Right ventricle myocardium inferior (tissue), 1 donor: ENCODE measurements at regions of chr18 and their contacts with region 1.

Region 1: DNA sequence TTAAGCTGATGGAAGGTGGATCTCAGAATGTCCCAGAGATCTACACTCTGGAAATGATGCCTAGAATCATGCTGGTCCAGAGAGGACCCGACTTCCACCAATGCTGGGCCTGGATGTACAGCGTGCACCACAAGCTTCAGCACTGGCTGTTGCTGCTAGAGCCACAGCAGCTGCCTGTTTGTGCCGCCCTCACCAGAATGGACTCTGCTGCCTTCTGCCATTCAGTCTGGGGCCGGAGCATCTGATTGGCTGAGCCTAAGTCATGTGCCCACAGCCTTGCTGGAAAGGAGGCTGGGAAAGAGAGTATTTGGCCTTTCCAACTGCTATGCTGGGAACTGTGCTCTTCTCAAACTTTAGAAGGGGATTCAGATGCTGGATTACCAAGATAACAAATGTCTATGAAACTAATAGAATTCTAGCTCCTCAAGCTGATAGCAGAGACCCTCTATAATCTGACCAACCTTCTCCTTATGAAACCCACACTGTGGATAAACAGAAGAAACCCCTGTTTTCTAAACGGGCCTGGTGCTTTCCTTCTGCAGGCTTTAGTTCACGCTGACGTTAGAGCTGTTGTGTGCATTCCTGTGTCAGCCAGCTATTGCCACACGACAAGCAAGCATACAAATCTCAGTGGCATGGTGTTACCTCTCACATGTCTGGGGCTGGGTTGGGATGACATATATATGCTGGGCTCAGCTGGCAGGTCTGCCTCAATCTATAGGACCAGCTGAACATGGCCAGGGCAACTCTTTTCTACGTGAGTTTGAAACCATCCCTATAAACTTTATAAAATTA is 4.1 kb upstream of the LOXHD1 start:
- DNase-seq: no peak
- ATAC-seq: no peak

Region 2: GRCh38 chr18:46148810-46149209 is 512.3 kb before region 1 on chr18:
- intact Hi-C with region 1: loop called (anchors 2 kb)
- DNase-seq: no peak
- ATAC-seq: peak; percentile 37

Region 3: GRCh38 chr18:46173393-46174341 is 487.5 kb before region 1 on chr18:
- intact Hi-C with region 1: loop called (anchors 2 kb)
- DNase-seq: peak; percentile 98
- ATAC-seq: peak; percentile 98

Region 4: GRCh38 chr18:46281185-46282176 is 379.7 kb before region 1 on chr18:
- intact Hi-C with region 1: loop called (anchors 5 kb)
- DNase-seq: peak; percentile 78
- ATAC-seq: peak; percentile 79

Region 5: GRCh38 chr18:46481048-46481846 is 179.9 kb before region 1 on chr18:
- intact Hi-C with region 1: loop called (anchors 5 kb)
- DNase-seq: no peak
- ATAC-seq: no peak

Region 6: DNA sequence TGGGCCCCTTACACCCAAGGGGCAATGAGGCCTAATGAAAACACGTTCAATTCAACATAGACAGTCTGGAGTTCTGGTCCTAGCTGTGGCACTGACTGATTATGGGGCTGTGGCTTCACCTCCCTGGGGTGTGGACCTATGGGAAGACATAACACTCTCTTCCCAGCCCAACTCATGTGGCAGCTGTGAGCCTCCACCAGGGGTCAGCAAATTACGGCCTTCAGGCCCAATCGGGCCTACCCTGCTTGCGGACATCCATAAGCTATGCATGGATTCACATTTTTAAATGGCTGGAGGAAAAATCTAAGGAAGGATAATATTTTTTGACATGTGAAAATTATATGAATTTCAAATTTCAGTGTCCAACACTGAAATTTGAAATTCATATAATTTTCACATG is 105.4 kb before region 1 on chr18:
- intact Hi-C with region 1: loop called (anchors 1 kb)
- DNase-seq: no peak
- ATAC-seq: no peak